ENCODE measurements at regions of chr2 and their contacts with region 1.

Region 1: DNA sequence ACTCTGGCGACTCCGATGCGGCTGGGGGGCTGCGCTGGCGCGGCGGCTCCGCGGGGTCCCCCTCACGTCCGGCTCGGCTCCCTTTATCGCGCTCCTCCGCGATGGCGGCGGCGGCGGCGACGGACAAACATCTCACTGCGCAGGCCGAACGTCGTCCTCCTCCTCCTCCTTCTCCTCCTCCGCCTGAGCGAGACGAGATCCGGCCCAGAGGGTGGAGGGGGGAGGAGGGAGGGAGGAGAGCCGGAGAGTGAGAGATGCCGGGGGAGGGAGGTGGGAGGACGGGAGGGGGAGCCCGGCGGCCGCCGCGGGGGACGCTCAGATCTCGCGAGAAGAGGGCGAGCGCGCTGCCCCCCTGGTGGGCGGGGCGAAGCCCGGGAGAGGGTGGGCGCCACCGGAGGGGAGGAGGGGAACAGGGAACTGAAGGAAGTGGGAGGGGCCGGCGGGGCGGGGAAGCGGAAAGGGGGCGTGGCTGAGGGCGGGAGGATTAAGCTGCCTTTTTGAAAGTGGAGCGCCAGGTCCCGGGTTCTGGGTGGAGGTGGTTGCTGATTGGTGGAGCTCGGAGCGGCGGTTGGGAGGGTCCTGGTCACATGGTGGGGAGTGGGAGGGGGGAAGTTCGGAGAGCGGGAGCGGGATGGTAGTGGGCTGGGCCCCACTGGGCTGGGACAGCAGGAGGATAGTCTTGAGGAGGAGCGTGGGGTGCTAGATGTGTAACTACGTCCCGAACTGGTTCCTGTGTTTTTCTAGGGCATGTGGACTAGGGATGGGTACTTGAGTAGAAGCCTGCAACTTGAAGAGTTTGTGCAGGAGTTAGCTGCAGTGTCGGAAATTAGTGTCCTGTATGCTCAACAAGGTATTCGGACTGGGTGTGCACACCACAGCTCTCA is at the start of gene CUL3:
- DNase-seq: peak; percentile 95
- H3K4me3 ChIP-seq: peak within 1 kb of the TSS; percentile 76 to 91 (median 78)
- H3K27ac ChIP-seq: peak within 1 kb of the TSS; percentile 95 to 99 (median 96)
- H3K4me1 ChIP-seq: peaks cover 11 to 51% (median 24%) of the 10 kb centered on the region in 3 donors
- H3K27me3 ChIP-seq: no peaks in the 10 kb centered on the region
- CTCF ChIP-seq: no peak
- POLR2A ChIP-seq: peak in 3 of 4 donors; percentile 70 to 89 (median 89)
- total RNA-seq, gene CUL3: 59.7 to 91.4 (median 85.2) TPM

Region 2: DNA sequence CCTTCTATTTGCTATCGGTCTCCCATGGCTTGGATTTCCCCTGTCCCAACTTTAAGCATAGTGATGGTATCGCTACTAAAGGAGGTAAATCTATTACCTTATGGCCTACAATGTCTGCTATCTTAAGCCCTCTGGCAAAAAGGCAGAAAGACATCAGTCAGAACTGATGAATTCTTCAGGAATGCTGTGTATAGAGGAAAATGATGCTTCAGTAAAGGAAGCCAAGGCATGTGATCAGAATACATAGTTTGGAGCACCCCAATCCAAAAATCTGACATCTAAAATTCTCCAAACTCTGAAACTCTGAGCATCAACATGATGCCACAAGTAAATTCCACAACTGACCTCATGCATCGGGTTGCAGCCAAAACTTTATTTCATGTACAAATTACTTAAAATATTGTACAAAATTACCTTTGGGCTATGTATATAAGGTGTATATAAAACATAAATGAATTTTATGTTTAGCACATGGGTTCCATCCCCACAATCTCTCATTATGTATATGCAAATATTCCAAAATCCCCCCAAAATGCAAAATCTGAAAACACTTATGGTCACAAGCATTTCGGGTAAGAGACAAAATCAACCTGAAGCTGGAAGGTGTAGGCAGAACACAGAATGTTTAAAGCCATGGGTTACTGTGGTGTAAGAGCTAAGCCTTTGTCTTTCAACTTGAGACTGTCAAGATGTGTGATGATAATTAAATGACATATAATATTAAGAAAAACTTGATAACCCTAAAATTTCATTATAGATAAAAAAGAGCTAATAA is 66.5 kb before region 1 on chr2:
- intact Hi-C with region 1: loop called (anchors 10 kb)
- DNase-seq: no peak
- H3K4me3 ChIP-seq: no peak overlapping the region
- H3K27ac ChIP-seq: no peak overlapping the region
- H3K4me1 ChIP-seq: peaks cover 20 to 70% (median 44%) of the 10 kb centered on the region in 3 donors
- H3K27me3 ChIP-seq: no peaks in the 10 kb centered on the region
- CTCF ChIP-seq: no peak
- POLR2A ChIP-seq: no peak

Region 3: GRCh38 chr2:224694502-224694901 is 109.1 kb after region 1 on chr2:
- intact Hi-C with region 1: no loop called
- DNase-seq: no peak
- H3K4me3 ChIP-seq: no peak overlapping the region
- H3K27ac ChIP-seq: no peak overlapping the region
- H3K4me1 ChIP-seq: no peaks in the 10 kb centered on the region
- H3K27me3 ChIP-seq: no peaks in the 10 kb centered on the region
- CTCF ChIP-seq: no peak
- POLR2A ChIP-seq: no peak

Region 4: DNA sequence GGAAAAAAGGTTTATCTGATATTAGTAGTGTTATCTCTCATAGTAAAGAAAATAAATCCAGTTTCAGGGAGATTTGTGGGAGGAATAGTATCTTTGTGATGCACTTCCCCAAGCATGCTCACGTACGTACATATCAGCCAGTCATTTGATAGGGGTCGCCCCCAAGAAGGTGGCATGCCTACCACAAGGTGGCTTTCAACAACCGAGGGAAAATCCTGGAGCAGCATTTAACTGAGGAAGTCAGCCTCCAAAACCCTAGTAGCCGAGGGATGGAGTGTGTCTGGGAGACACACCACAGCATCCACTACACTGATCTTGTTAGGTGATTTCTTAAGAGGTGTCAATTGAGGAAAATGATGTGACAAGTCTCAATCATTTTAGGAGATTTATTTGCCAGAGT is 1437.9 kb after region 1 on chr2:
- intact Hi-C with region 1: no loop called
- DNase-seq: no peak
- H3K4me3 ChIP-seq: no peak overlapping the region
- H3K27ac ChIP-seq: no peak overlapping the region
- H3K4me1 ChIP-seq: no peaks in the 10 kb centered on the region
- H3K27me3 ChIP-seq: no peaks in the 10 kb centered on the region
- CTCF ChIP-seq: no peak
- POLR2A ChIP-seq: no peak